ENCODE measurements at regions of chr16 and their contacts with region 1.

Region 1: GRCh38 chr16:53111078-53111791 is 56.4 kb downstream of the CHD9 start:
- DNase-seq: no peak
- H3K4me3 ChIP-seq: no peak overlapping the region
- H3K27ac ChIP-seq: no peak overlapping the region
- H3K4me1 ChIP-seq: peaks cover 0 to 5% (median 0%) of the 10 kb centered on the region in 4 donors
- H3K27me3 ChIP-seq: no peaks in the 10 kb centered on the region
- CTCF ChIP-seq: no peak
- EP300 ChIP-seq: no peak
- POLR2A ChIP-seq: no peak

Region 2: GRCh38 chr16:53098526-53099317 is 12.5 kb before region 1 on chr16:
- intact Hi-C with region 1: no loop called
- DNase-seq: peak; percentile 95
- H3K4me3 ChIP-seq: peak overlapping the region; percentile 10 to 41 (median 36)
- H3K27ac ChIP-seq: peak overlapping the region; percentile 93 to 96 (median 94)
- H3K4me1 ChIP-seq: peaks cover 0 to 63% (median 55%) of the 10 kb centered on the region in 4 donors
- H3K27me3 ChIP-seq: no peaks in the 10 kb centered on the region
- CTCF ChIP-seq: no peak
- EP300 ChIP-seq: no peak
- POLR2A ChIP-seq: no peak

Region 3: GRCh38 chr16:53123747-53124146 is 12.5 kb after region 1 on chr16:
- intact Hi-C with region 1: loop called (anchors 2 kb)
- DNase-seq: no peak
- H3K4me3 ChIP-seq: no peak overlapping the region
- H3K27ac ChIP-seq: peak overlapping the region in 3 of 4 donors; percentile 38 to 83 (median 81)
- H3K4me1 ChIP-seq: peaks cover 0 to 37% (median 32%) of the 10 kb centered on the region in 4 donors
- H3K27me3 ChIP-seq: no peaks in the 10 kb centered on the region
- CTCF ChIP-seq: no peak
- EP300 ChIP-seq: peak in 3 of 4 donors; percentile 28 to 74 (median 29)
- POLR2A ChIP-seq: no peak

Region 4: GRCh38 chr16:53135329-53135728 is 24.1 kb after region 1 on chr16:
- intact Hi-C with region 1: no loop called
- DNase-seq: no peak
- H3K4me3 ChIP-seq: no peak overlapping the region
- H3K27ac ChIP-seq: peak overlapping the region in 2 of 4 donors; percentile 43 to 98
- H3K4me1 ChIP-seq: peaks cover 0 to 35% (median 29%) of the 10 kb centered on the region in 4 donors
- H3K27me3 ChIP-seq: no peaks in the 10 kb centered on the region
- CTCF ChIP-seq: no peak
- EP300 ChIP-seq: no peak
- POLR2A ChIP-seq: no peak

Region 5: GRCh38 chr16:53415504-53415903 is 304.3 kb after region 1 on chr16:
- intact Hi-C with region 1: no loop called
- DNase-seq: no peak
- H3K4me3 ChIP-seq: no peak overlapping the region
- H3K27ac ChIP-seq: no peak overlapping the region
- H3K4me1 ChIP-seq: no peaks in the 10 kb centered on the region
- H3K27me3 ChIP-seq: no peaks in the 10 kb centered on the region
- CTCF ChIP-seq: no peak
- EP300 ChIP-seq: no peak
- POLR2A ChIP-seq: no peak